Head of caudate nucleus (tissue), 42 donors: ENCODE measurements at regions of chr2 and their contacts with region 1.

Region 1: GRCh38 chr2:39059366-39059952 is 61.4 kb downstream of the SOS1 start:
- DNase-seq: no peak

Region 2: GRCh38 chr2:39124000-39124745 is 64.7 kb after region 1 on chr2:
- intact Hi-C with region 1: loop called (anchors 5 kb)
- DNase-seq: peak; percentile 87 to 98 (median 96)